Activated T-helper 2 cell treated with anti-CD3 and anti-CD28 coated beads, Interferon-gamma antibody, Interleukin-2, Interleukin-4, amounts not matched to agents 10 μg/mL and 5 μg/mL and 100 μg/mL, durations not matched to agents 14 hours and 24 hours and 36 hours (primary cell): ENCODE measurements at regions of chr11 and their contacts with region 1.

Region 1: GRCh38 chr11:57741132-57742086 is at the start of gene SELENOH:
- DNase-seq: peak; percentile 94
- H3K4me3 Mint-ChIP-seq: peak within 1 kb of the TSS; percentile 96
- H3K27ac Mint-ChIP-seq: peak within 1 kb of the TSS; percentile 90
- H3K4me1 Mint-ChIP-seq: peaks cover 17% of the 10 kb centered on the region
- H3K27me3 Mint-ChIP-seq: no peaks in the 10 kb centered on the region
- total RNA-seq, gene SELENOH: 179 and 183 TPM in 2 replicates

Region 2: GRCh38 chr11:57426929-57427726 is 314.3 kb before region 1 on chr11 and contains the start of gene SLC43A3:
- intact Hi-C with region 1: loop called (anchors 1 kb)
- DNase-seq: peak; percentile 66
- H3K4me3 Mint-ChIP-seq: peak within 1 kb of the TSS; percentile 91
- H3K27ac Mint-ChIP-seq: peak within 1 kb of the TSS; percentile 64
- H3K4me1 Mint-ChIP-seq: peaks cover 44% of the 10 kb centered on the region
- H3K27me3 Mint-ChIP-seq: peaks cover 3% of the 10 kb centered on the region
- total RNA-seq, gene SLC43A3: 174 and 189 TPM in 2 replicates

Region 3: GRCh38 chr11:57657194-57658022 is 84.0 kb before region 1 on chr11 and contains the start of gene CLP1:
- intact Hi-C with region 1: loop called (anchors 1 kb)
- DNase-seq: peak; percentile 99
- H3K4me3 Mint-ChIP-seq: peak within 1 kb of the TSS; percentile 99
- H3K27ac Mint-ChIP-seq: peak within 1 kb of the TSS; percentile 94
- H3K4me1 Mint-ChIP-seq: peaks cover 26% of the 10 kb centered on the region
- H3K27me3 Mint-ChIP-seq: no peaks in the 10 kb centered on the region
- total RNA-seq, gene CLP1: 17.7 and 19.9 TPM in 2 replicates

Region 4: GRCh38 chr11:57712256-57713150 is 28.9 kb before region 1 on chr11 and contains the start of gene TMX2:
- intact Hi-C with region 1: loop called (anchors 1 kb)
- DNase-seq: peak; percentile 90
- H3K4me3 Mint-ChIP-seq: peak within 1 kb of the TSS; percentile 99
- H3K27ac Mint-ChIP-seq: peak within 1 kb of the TSS; percentile 94
- H3K4me1 Mint-ChIP-seq: peaks cover 35% of the 10 kb centered on the region
- H3K27me3 Mint-ChIP-seq: no peaks in the 10 kb centered on the region
- total RNA-seq, gene TMX2: 74.6 and 80.0 TPM in 2 replicates

Region 5: DNA sequence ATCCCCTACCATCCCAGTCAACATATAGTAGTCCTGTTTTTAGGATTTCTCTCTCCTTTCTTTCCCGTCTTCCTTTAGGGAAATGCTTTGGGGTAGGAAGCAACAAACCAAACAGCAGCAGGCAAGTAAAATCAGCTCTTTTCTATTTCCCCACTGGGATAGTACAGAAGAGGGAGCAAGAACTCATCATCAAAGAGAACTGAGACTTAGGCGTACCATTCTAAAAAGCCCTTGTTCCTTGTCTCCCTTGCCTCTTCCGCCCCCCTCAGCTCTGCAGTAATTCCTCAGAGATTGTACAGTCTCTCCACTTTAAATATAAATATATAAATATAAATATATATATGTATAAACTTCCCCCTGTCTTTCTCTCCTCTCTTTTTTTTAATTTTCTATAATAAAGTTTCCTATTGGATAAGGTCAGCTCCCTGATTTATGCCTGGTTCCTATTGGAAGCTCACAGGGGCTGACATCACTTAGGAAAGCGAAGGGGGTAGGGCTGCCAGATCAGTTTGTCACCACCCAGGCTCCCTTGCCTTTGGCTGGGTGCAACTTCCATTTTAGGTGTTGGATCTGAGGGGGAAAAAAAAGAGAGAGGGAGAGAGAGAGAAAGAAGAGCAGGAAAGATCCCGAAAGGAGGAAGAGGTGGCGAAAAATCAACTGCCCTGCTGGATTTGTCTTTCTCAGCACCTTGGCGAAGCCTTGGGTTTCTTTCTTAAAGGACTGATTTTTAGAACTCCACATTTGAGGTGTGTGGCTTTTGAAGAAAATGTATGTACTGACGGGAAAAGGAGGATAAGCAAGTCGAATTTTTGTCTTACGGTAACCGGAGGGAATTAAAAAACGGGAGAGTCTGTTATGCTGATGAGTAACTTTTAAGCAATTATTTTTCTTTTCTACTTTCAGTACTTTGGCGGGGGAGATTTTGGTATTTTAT is 20.2 kb after region 1 on chr11 and contains the start of gene CTNND1:
- intact Hi-C with region 1: no loop called
- DNase-seq: no peak
- H3K4me3 Mint-ChIP-seq: peak within 1 kb of the TSS; percentile 66
- H3K27ac Mint-ChIP-seq: no peak within 1 kb of the TSS
- H3K4me1 Mint-ChIP-seq: peaks cover 21% of the 10 kb centered on the region
- H3K27me3 Mint-ChIP-seq: no peaks in the 10 kb centered on the region
- total RNA-seq, gene CTNND1: 6.2 and 7.5 TPM in 2 replicates

Region 6: DNA sequence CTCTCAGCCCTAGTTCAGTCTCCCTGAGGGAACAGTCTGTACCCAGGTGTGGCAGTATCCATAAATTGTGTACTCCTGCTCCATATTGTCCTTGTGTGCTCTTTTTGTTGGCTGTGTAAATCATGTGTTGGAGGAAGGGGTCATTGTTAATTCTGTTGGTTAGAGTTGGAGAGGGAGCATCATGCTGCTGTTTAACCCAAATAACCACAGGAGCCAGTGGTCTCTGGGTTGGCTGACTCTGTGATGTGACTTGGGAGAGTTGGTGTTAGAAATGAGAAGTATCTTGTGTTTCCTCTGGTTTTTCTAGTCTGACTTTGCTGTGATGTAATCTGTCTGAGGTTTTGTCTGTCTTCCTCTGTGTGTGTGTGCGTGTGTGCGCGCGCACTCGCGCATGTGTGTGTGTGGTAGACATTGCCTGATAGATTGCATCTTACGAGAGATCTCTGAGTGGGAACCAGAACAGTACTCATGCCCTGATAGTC is 50.7 kb after region 1 on chr11:
- intact Hi-C with region 1: loop called (anchors 1 kb)
- DNase-seq: peak; percentile 85
- H3K4me3 Mint-ChIP-seq: peak overlapping the region; percentile 45
- H3K27ac Mint-ChIP-seq: peak overlapping the region; percentile 68
- H3K4me1 Mint-ChIP-seq: peaks cover 40% of the 10 kb centered on the region
- H3K27me3 Mint-ChIP-seq: no peaks in the 10 kb centered on the region

Region 7: GRCh38 chr11:57800444-57801182 is 59.2 kb after region 1 on chr11:
- intact Hi-C with region 1: loop called (anchors 2 kb)
- DNase-seq: no peak
- H3K4me3 Mint-ChIP-seq: no peak overlapping the region
- H3K27ac Mint-ChIP-seq: peak overlapping the region; percentile 53
- H3K4me1 Mint-ChIP-seq: peaks cover 29% of the 10 kb centered on the region
- H3K27me3 Mint-ChIP-seq: no peaks in the 10 kb centered on the region

Region 8: DNA sequence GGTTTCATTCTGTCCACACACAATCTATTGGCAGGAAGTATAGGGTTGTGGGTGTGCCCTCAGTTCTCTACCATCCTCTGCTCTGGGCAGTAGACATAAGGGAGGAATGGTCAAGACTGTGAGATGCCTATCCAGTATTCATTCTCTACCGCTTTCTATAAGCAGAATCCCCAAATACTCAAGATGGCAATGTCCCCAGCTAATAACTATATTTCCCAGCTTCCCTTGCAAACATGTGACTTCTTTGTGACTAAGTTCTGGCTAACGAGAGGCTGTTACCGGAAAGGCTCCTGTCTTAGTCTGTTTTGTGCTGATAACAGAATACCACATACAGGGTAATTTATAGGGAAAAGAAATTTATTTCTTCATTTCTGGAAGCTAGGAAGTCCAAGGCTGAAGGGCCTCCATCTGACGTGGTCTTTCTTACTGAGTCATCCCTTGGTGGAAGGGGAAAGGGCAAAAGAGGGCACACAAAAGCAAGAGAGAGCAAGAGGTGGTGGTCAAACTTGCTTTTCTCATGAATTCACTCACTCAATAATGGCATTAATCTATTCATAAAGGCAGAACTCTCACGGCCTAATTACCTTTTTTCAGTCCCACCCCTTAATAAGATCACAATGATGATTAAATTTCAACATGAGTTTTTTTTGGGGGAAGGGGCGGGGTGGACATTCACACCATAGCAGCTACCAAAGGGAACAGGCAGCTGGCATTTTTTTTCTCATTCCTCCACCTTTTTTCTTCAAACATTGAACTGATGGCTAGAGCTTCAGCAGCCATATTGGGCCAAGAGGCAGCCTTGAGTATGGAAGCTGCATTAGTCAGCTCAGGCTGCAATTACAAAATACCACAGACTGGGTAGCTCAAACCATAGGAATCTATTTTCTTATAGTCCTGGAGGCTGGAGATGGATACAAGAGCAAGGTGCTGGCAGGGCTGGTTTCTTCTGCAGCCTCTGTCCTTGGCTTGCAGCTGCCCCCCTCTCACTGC is 172.6 kb after region 1 on chr11:
- intact Hi-C with region 1: no loop called
- DNase-seq: no peak
- H3K4me3 Mint-ChIP-seq: no peak overlapping the region
- H3K27ac Mint-ChIP-seq: no peak overlapping the region
- H3K4me1 Mint-ChIP-seq: no peaks in the 10 kb centered on the region
- H3K27me3 Mint-ChIP-seq: no peaks in the 10 kb centered on the region

Region 9: GRCh38 chr11:58524232-58525036 is 783.0 kb after region 1 on chr11:
- intact Hi-C with region 1: loop called (anchors 2 kb)
- DNase-seq: peak; percentile 29
- H3K4me3 Mint-ChIP-seq: peak overlapping the region; percentile 75
- H3K27ac Mint-ChIP-seq: peak overlapping the region; percentile 88
- H3K4me1 Mint-ChIP-seq: peaks cover 48% of the 10 kb centered on the region
- H3K27me3 Mint-ChIP-seq: no peaks in the 10 kb centered on the region